CD4-positive, alpha-beta memory T cell (primary cell): ENCODE measurements at regions of chr2 and their contacts with region 1.

Region 1: GRCh38 chr2:61426267-61426897 is 44.5 kb downstream of the USP34 start:
- DNase-seq: peak; percentile 67 to 76 (median 71)
- H3K4me3 ChIP-seq: no peak overlapping the region
- H3K4me3 Mint-ChIP-seq: peak overlapping the region in 4 of 8 donors; percentile 4 to 54 (median 40)
- H3K27ac ChIP-seq: peak overlapping the region; percentile 19
- H3K27ac Mint-ChIP-seq: peak overlapping the region; percentile 73 to 91 (median 89)
- H3K4me1 ChIP-seq: peaks cover 57% of the 10 kb centered on the region
- H3K4me1 Mint-ChIP-seq: peaks cover 49 to 74% (median 66%) of the 10 kb centered on the region in 4 donors
- H3K27me3 ChIP-seq: no peaks in the 10 kb centered on the region
- H3K27me3 Mint-ChIP-seq: no peaks in the 10 kb centered on the region

Region 2: DNA sequence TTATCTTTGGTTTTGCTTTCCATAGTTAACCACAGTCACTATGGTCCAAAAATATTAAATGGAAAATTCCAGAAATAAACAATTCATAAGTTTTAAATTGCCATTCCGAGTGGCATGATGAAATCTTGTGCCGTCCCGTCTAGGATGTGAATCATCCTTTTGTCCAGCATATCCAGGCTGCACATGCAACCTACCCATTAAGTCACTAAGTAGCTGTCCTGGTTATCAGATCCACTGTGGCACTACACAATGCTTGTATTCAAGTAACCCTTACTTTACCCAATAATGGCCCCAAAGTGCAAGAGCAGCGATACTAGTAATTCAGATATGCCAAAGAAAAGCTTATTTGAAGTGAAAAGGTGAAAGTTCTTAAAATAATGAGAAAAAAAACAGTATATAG is 33.8 kb after region 1 on chr2:
- CTCF ChIA-PET with region 1: interaction called, 11 read pairs
- POLR2A ChIA-PET with region 1: interaction called, 4 read pairs
- intact Hi-C with region 1: no loop called
- DNase-seq: no peak
- H3K4me3 ChIP-seq: no peak overlapping the region
- H3K4me3 Mint-ChIP-seq: peak overlapping the region in 2 of 8 donors; percentile 24 to 32
- H3K27ac ChIP-seq: no peak overlapping the region
- H3K27ac Mint-ChIP-seq: peak overlapping the region in 2 of 7 donors; percentile 32 to 66
- H3K4me1 ChIP-seq: peaks cover 90% of the 10 kb centered on the region
- H3K4me1 Mint-ChIP-seq: peaks cover 51 to 94% (median 69%) of the 10 kb centered on the region in 4 donors
- H3K27me3 ChIP-seq: no peaks in the 10 kb centered on the region
- H3K27me3 Mint-ChIP-seq: no peaks in the 10 kb centered on the region

Region 3: DNA sequence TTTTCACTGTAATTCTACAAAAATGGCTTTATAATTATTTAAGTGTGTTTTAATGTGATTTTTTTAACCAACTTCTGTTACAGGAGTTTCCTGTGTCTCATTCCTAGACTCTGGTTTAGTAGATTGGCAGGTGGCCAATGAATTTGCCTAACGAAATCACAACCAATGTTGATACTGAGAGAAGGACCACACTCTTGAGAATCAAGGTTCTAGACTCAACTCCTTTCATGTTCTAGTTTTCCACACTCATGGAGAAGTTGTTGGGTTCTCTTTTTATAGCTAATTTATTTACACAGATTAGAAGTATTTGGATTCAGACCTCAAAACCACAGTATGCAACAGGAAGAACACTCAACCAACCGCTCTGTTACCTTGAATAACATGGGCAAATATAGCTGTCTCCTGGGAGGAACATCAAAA is 67.2 kb after region 1 on chr2:
- CTCF ChIA-PET with region 1: interaction called, 12 read pairs
- POLR2A ChIA-PET with region 1: interaction called, 9 read pairs
- intact Hi-C with region 1: loop called (anchors 1 kb)
- DNase-seq: peak in 4 of 5 donors; percentile 18 to 30 (median 22)
- H3K4me3 ChIP-seq: peak overlapping the region in 1 of 2 donors; percentile 5
- H3K4me3 Mint-ChIP-seq: peak overlapping the region in 7 of 8 donors; percentile 23 to 79 (median 57)
- H3K27ac ChIP-seq: peak overlapping the region; percentile 23
- H3K27ac Mint-ChIP-seq: peak overlapping the region; percentile 43 to 87 (median 70)
- H3K4me1 ChIP-seq: peaks cover 17% of the 10 kb centered on the region
- H3K4me1 Mint-ChIP-seq: peaks cover 11 to 29% (median 20%) of the 10 kb centered on the region in 4 donors
- H3K27me3 ChIP-seq: no peaks in the 10 kb centered on the region
- H3K27me3 Mint-ChIP-seq: no peaks in the 10 kb centered on the region

Region 4: DNA sequence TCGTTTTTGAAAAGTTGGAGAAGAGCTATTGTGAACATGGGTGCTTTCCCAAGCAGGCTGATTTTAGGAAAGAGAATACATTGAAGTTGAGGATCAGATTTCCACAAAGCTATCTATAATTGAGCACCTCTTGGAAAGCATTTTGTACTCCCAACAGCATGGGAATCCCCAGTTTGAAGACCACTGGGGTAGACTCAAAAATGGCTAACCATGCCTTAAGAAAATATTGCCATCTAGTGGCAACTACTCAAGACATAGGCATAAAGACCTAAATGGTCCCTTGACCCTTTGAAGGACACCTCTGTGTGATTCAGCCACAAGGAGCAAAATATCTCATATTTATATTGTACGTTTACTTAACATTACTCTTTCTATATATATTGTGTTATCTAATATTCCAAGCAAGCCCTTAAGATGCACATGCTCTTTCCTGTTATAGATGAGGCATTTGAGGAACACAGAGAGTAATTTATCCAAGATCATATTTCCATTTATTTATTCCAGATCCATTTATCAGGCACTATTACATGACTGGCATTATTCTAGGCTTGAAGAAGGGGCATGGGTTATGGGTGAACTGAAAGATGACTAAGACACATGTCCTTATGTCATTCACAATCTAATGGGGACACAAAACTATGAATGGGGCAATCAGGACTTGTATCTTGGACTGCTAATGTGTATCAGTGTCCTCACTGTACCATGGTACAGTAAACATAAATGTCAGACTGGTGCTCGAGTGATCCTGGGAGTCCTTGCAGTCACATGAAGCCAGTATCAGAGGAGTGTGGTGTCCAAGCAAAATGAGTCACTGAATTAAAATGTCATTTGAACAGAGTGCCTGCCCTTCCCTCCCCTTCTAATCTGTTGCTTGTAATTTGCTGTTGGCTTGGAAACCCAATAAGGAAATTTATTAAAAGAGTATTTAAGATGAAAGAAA is 232.7 kb after region 1 on chr2:
- CTCF ChIA-PET with region 1: interaction called, 39 read pairs
- POLR2A ChIA-PET with region 1: no interaction called
- intact Hi-C with region 1: loop called (anchors 1 kb)
- DNase-seq: peak in 1 of 5 donors; percentile 7
- H3K4me3 ChIP-seq: no peak overlapping the region
- H3K4me3 Mint-ChIP-seq: no peak overlapping the region
- H3K27ac ChIP-seq: no peak overlapping the region
- H3K27ac Mint-ChIP-seq: no peak overlapping the region
- H3K4me1 ChIP-seq: peaks cover 6% of the 10 kb centered on the region
- H3K4me1 Mint-ChIP-seq: peaks cover 0 to 7% (median 5%) of the 10 kb centered on the region in 4 donors
- H3K27me3 ChIP-seq: no peaks in the 10 kb centered on the region
- H3K27me3 Mint-ChIP-seq: no peaks in the 10 kb centered on the region